AG04450 (cell line): ENCODE measurements at regions of chr1 and their contacts with region 1.

Region 1: DNA sequence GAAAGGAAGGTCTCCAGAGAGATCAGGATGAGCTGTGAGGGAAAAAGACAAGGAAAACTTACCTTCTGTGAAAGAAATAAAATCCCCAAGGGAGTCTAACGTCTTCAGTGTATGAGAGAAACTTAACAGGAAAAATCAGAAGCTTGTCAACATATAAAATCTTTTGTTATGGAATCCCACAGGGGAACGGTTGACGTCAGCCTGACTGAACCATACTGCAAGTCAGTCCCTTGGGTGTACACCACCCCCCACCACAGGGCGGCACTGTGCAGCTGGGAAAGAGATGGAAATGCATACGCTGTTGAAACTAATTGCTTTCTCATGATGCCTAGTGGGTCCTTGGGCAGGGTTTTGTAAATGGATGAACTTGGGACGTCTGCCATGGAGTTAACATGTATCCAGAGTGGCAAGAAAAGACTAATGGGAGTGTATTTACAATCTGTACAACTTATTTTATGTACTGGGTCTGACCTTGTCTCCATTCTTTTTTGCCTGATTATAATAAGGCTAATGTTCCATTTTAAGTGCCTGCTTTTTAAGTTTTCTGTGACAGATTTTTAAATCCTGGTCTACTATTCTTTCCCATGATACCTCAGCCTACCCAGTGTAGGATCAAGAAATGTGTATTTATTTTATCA is 22.7 kb downstream of the UTP25 start:
- DNase-seq: no peak
- H3K4me3 ChIP-seq: no peak overlapping the region
- H3K27ac ChIP-seq: no peak overlapping the region
- H3K27me3 ChIP-seq: no peaks in the 10 kb centered on the region
- CTCF ChIP-seq: peak; percentile 86

Region 2: GRCh38 chr1:209839875-209840491 is 10.5 kb before region 1 on chr1:
- CTCF ChIA-PET with region 1: interaction called, 13 read pairs
- POLR2A ChIA-PET with region 1: no interaction called
- DNase-seq: peak; percentile 88
- H3K4me3 ChIP-seq: peak overlapping the region; percentile 22
- H3K27ac ChIP-seq: peak overlapping the region; percentile 96
- H3K27me3 ChIP-seq: no peaks in the 10 kb centered on the region
- CTCF ChIP-seq: no peak

Region 3: GRCh38 chr1:210061992-210062391 is 211.5 kb after region 1 on chr1:
- CTCF ChIA-PET with region 1: no interaction called
- POLR2A ChIA-PET with region 1: no interaction called
- DNase-seq: no peak
- H3K4me3 ChIP-seq: no peak overlapping the region
- H3K27ac ChIP-seq: no peak overlapping the region
- H3K27me3 ChIP-seq: no peaks in the 10 kb centered on the region
- CTCF ChIP-seq: no peak